Adrenal gland (tissue), 19 donors: ENCODE measurements at regions of chr7 and their contacts with region 1.

Region 1: DNA sequence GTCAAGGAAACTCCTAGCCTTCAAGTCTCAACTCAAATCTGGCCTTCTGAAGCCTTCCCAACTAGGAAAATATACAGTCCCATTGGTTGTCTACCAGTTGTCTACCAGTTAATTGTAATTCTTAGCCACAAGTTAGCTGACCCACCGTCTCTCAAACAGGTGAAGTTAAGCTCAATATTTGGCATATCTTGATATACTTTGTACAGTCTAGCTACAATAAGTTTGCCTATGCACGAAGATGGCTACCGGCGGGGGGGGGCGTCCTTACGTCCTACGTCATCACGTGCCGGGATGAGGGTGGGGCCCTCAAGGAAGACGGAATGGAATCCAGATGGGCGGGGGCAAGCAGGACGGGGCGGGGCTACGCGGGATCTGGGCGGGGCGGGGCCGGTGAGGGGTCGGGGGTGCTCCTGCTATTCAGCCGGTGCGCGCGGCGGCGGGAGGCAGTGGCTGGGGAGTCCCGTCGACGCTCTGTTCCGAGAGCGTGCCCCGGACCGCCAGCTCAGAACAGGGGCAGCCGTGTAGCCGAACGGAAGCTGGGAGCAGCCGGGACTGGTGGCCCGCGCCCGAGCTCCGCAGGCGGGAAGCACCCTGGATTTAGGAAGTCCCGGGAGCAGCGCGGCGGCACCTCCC is at the start of gene AHR:
- DNase-seq: peak; percentile 91 to 97 (median 96)
- H3K4me3 ChIP-seq: peak within 1 kb of the TSS; percentile 72 to 99 (median 90)
- H3K27ac ChIP-seq: peak within 1 kb of the TSS; percentile 35 to 95 (median 92)
- H3K4me1 ChIP-seq: peaks cover 6 to 31% of the 10 kb centered on the region in 2 donors
- H3K27me3 ChIP-seq: no peaks in the 10 kb centered on the region
- CTCF ChIP-seq: peak in 1 of 6 experiments; percentile 6
- POLR2A ChIP-seq: peak; percentile 88 to 95
- total RNA-seq, gene AHR: 32.3 to 161 (median 101) TPM

Region 2: GRCh38 chr7:16982640-16983350 is 315.5 kb before region 1 on chr7:
- intact Hi-C with region 1: loop called in 1 of 2 experiments (anchors 10 kb)
- DNase-seq: peak in 6 of 7 donors; percentile 22 to 59 (median 32)
- H3K4me3 ChIP-seq: no peak overlapping the region
- H3K27ac ChIP-seq: no peak overlapping the region
- H3K4me1 ChIP-seq: peaks cover 0 to 4% of the 10 kb centered on the region in 2 donors
- H3K27me3 ChIP-seq: no peaks in the 10 kb centered on the region
- CTCF ChIP-seq: peak; percentile 80 to 100 (median 90)
- POLR2A ChIP-seq: no peak

Region 3: GRCh38 chr7:17134786-17135185 is 163.5 kb before region 1 on chr7:
- intact Hi-C with region 1: no loop called
- DNase-seq: no peak
- H3K4me3 ChIP-seq: no peak overlapping the region
- H3K27ac ChIP-seq: no peak overlapping the region
- H3K4me1 ChIP-seq: no peaks in the 10 kb centered on the region
- H3K27me3 ChIP-seq: no peaks in the 10 kb centered on the region
- CTCF ChIP-seq: no peak
- POLR2A ChIP-seq: no peak

Region 4: DNA sequence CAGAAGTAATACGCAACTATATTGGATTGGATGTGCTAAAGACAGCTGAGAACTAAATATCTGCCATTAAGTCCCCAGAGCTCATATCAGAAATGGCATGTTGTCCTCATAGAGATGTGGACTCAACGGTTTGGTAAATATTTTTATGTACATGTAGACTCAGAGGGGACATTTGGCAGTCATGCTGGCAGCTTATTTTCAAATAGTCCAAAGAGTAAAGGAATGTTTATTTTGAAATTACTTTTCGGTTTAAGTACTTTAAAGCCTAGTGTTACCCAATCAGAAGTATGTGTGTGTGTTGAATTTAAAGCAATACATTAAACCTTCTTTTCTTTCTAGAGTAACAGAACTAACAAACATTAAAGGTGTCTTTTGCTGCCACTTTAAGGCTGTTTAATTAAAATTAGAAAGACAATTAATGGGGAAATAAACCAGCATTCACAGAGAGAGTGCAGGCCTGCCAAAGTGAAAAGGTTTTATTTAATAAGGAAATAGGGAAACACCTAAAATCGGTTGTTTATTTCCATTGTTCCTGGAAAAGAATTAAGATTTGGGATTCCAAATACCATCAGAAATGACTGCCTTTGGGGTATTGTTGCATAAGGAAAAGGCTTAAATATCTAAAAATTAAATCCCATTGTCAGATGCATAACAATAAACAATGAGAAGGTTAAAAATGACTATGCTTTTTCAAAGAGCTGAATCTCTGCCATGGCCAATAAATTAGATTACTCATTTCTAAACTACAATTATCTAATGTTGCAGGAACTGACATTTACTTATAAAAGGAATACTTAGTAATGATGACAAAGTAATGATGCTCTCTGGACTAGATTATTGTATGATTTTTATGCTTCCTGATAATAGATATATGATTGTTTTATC is 113.3 kb before region 1 on chr7:
- intact Hi-C with region 1: loop called in 1 of 2 experiments (anchors 5 kb)
- DNase-seq: no peak
- H3K4me3 ChIP-seq: no peak overlapping the region
- H3K27ac ChIP-seq: peak overlapping the region; percentile 62 to 83 (median 74)
- H3K4me1 ChIP-seq: peaks cover 31 to 36% of the 10 kb centered on the region in 2 donors
- H3K27me3 ChIP-seq: no peaks in the 10 kb centered on the region
- CTCF ChIP-seq: no peak
- POLR2A ChIP-seq: no peak

Region 5: GRCh38 chr7:17646253-17646956 is 348.1 kb after region 1 on chr7:
- intact Hi-C with region 1: loop called in 1 of 2 experiments (anchors 5 kb)
- DNase-seq: no peak
- H3K4me3 ChIP-seq: no peak overlapping the region
- H3K27ac ChIP-seq: no peak overlapping the region
- H3K4me1 ChIP-seq: peaks cover 0 to 5% of the 10 kb centered on the region in 2 donors
- H3K27me3 ChIP-seq: no peaks in the 10 kb centered on the region
- CTCF ChIP-seq: peak in 5 of 6 experiments; percentile 32 to 59 (median 52)
- POLR2A ChIP-seq: no peak